Psoas muscle (tissue), 8 donors: ENCODE measurements at regions of chr12 and their contacts with region 1.

Region 1: GRCh38 chr12:14239350-14239934 is 126.0 kb upstream of the ATF7IP start:
- DNase-seq: peak in 1 of 2 donors; percentile 16
- ATAC-seq: peak; percentile 44 to 94 (median 85)
- H3K4me3 ChIP-seq: peak overlapping the region; percentile 41
- H3K27ac ChIP-seq: no peak overlapping the region
- H3K4me1 ChIP-seq: peaks cover 6% of the 10 kb centered on the region
- H3K27me3 ChIP-seq: no peaks in the 10 kb centered on the region
- CTCF ChIP-seq: no peak

Region 2: GRCh38 chr12:14290951-14291350 is 51.5 kb after region 1 on chr12:
- intact Hi-C with region 1: no loop called
- DNase-seq: no peak
- ATAC-seq: no peak
- H3K4me3 ChIP-seq: no peak overlapping the region
- H3K27ac ChIP-seq: no peak overlapping the region
- H3K4me1 ChIP-seq: no peaks in the 10 kb centered on the region
- H3K27me3 ChIP-seq: no peaks in the 10 kb centered on the region
- CTCF ChIP-seq: no peak

Region 3: GRCh38 chr12:14422516-14423230 is 183.2 kb after region 1 on chr12:
- intact Hi-C with region 1: loop called in 1 of 2 experiments (anchors 5 kb)
- DNase-seq: no peak
- ATAC-seq: no peak
- H3K4me3 ChIP-seq: no peak overlapping the region
- H3K27ac ChIP-seq: no peak overlapping the region
- H3K4me1 ChIP-seq: peaks cover 14% of the 10 kb centered on the region
- H3K27me3 ChIP-seq: no peaks in the 10 kb centered on the region
- CTCF ChIP-seq: no peak

Region 4: DNA sequence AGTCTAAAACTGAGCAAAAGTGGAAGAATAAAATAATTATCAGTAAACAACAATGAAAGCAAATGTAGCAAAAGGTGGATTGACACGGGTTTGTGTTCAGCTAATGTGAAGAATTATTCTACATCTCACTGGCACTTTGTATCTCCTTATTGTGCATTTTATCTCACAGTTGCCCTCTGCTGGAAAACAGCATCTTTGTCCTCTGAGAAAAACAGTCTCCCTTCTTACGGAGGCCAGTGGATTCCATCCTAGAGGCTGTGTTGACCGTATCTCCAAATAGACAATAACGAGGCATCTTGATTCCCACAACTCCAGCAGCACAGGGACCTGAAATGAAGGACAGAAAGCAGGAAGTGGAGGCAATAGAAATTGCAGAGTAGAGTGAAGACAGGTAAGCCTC is 379.5 kb after region 1 on chr12:
- intact Hi-C with region 1: loop called in 1 of 2 experiments (anchors 5 kb)
- DNase-seq: no peak
- ATAC-seq: peak in 1 of 4 donors; percentile 60
- H3K4me3 ChIP-seq: no peak overlapping the region
- H3K27ac ChIP-seq: no peak overlapping the region
- H3K4me1 ChIP-seq: peaks cover 3% of the 10 kb centered on the region
- H3K27me3 ChIP-seq: no peaks in the 10 kb centered on the region
- CTCF ChIP-seq: peak; percentile 33

Region 5: DNA sequence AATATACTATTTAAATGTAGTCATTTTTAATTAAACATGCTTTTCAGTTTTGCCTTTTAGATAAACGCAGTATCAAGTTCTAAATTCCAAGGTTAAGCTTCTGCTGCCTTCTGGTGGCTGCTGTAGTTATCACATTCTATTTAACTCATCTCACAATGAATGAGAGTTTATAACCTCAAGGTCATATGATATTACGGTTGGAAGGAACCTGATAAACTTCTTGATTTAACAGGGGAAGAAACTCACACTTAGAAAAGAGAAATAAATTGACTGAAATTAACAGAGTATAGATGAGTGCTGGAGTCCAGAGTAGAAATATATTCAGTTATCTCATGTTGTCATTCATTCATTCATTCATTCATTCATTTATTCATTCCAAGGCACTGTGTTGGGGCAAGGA is 425.1 kb after region 1 on chr12:
- intact Hi-C with region 1: loop called in 1 of 2 experiments (anchors 5 kb)
- DNase-seq: no peak
- ATAC-seq: peak in 3 of 4 donors; percentile 57 to 76 (median 58)
- H3K4me3 ChIP-seq: no peak overlapping the region
- H3K27ac ChIP-seq: no peak overlapping the region
- H3K4me1 ChIP-seq: no peaks in the 10 kb centered on the region
- H3K27me3 ChIP-seq: no peaks in the 10 kb centered on the region
- CTCF ChIP-seq: peak; percentile 71

Region 6: DNA sequence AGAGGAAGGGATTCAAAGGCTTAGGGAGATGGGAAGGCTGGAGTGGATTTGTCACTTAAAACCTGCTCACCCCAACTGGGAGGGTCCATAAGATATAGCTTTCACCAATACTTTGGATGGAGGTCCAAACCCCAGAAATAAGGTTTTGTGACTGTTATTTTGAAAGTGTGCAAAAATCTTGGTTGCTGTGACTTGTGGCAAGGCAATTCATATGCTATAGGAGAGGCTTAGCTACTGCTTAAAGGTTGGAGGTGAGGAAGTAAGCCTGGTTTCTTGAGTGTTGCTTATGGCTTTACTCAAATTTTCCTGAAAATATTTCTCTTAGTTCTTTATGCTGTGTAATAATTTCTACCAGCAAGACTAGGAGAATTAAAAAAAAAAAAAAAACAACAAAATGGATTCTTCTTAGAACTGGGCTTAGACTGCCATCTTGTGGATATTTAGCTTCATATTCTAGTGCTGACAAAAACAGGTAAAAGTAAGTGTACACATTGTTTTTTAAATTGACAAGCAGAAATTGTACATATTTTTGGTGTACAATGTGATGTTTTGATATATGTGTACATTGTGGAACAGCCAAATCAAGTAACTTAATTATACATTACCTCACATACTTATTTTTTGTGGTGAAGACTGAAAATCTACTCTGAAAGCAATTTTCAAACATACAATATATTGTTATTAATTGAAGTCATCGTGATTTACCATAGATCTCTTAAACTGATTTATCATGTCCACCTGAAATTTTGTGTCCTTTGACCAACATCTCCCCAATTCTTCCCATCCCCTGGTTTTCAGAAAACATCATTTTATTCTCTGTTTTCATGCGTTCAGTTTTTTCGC is 756.4 kb after region 1 on chr12:
- intact Hi-C with region 1: loop called (anchors 5 to 10 kb)
- DNase-seq: no peak
- ATAC-seq: peak in 3 of 4 donors; percentile 42 to 81 (median 53)
- H3K4me3 ChIP-seq: no peak overlapping the region
- H3K27ac ChIP-seq: no peak overlapping the region
- H3K4me1 ChIP-seq: peaks cover 7% of the 10 kb centered on the region
- H3K27me3 ChIP-seq: no peaks in the 10 kb centered on the region
- CTCF ChIP-seq: peak; percentile 79